ENCODE measurements at regions of chr16 and their contacts with region 1.

Region 1: GRCh38 chr16:27367461-27368357 is 34.3 kb upstream of the IL21R start:
- DNase-seq: peak; percentile 99
- ATAC-seq: peak; percentile 71
- H3K4me3 Mint-ChIP-seq: peak overlapping the region; percentile 50
- H3K27ac Mint-ChIP-seq: peak overlapping the region; percentile 100
- H3K4me1 Mint-ChIP-seq: peaks cover 84% of the 10 kb centered on the region
- H3K27me3 Mint-ChIP-seq: no peaks in the 10 kb centered on the region
- CTCF ChIP-seq: peak; percentile 86

Region 2: DNA sequence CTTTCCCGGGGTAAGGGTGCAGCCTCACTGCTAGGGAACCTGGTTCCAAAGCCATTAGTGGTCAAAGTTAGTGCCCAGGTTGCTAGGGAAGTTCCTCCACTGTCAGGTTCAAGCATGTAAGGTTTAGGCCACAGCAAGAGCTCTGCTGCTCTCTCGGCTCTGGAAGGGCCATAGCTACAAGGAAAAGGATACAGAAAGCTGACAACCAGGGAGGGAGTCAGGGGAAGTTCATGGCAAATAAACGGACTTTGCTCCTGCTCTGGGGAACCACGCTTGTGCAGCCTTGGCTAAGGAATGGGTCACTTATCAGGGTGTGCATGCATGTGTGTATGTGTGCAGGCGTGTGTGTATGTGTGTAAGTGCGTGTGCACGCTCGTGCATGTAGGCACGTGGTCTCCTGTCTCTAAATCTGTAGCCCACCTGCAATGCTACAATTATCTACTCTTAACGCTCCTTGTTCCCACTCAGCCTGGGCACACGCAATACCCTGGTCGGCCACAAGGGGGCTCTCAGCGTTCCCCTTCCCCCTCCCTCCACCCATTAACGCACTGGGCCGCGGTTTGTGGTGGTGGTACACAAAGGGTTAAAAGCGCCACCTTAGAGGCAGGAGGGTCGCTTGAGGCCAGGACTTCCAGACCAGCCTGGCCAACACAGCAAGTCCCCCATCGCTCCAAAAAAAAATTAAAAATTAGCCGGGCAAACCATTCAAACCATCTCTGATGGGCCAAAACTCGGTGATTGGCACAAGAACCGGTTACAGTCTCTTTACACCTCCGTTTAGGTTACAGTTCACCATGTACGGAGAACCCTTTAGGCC is 212.8 kb before region 1 on chr16:
- CTCF ChIA-PET with region 1: interaction called, 13 read pairs
- POLR2A ChIA-PET with region 1: interaction called, 4 read pairs
- intact Hi-C with region 1: no loop called
- DNase-seq: peak; percentile 81
- ATAC-seq: peak; percentile 97
- H3K4me3 Mint-ChIP-seq: no peak overlapping the region
- H3K27ac Mint-ChIP-seq: no peak overlapping the region
- H3K4me1 Mint-ChIP-seq: peaks cover 10% of the 10 kb centered on the region
- H3K27me3 Mint-ChIP-seq: no peaks in the 10 kb centered on the region
- CTCF ChIP-seq: peak; percentile 99

Region 3: GRCh38 chr16:27179500-27180072 is 188.1 kb before region 1 on chr16:
- CTCF ChIA-PET with region 1: interaction called, 57 read pairs
- POLR2A ChIA-PET with region 1: interaction called, 4 read pairs
- intact Hi-C with region 1: loop called (anchors 5 kb)
- DNase-seq: peak; percentile 97
- ATAC-seq: peak; percentile 98
- H3K4me3 Mint-ChIP-seq: no peak overlapping the region
- H3K27ac Mint-ChIP-seq: peak overlapping the region; percentile 43
- H3K4me1 Mint-ChIP-seq: peaks cover 44% of the 10 kb centered on the region
- H3K27me3 Mint-ChIP-seq: no peaks in the 10 kb centered on the region
- CTCF ChIP-seq: peak; percentile 98

Region 4: DNA sequence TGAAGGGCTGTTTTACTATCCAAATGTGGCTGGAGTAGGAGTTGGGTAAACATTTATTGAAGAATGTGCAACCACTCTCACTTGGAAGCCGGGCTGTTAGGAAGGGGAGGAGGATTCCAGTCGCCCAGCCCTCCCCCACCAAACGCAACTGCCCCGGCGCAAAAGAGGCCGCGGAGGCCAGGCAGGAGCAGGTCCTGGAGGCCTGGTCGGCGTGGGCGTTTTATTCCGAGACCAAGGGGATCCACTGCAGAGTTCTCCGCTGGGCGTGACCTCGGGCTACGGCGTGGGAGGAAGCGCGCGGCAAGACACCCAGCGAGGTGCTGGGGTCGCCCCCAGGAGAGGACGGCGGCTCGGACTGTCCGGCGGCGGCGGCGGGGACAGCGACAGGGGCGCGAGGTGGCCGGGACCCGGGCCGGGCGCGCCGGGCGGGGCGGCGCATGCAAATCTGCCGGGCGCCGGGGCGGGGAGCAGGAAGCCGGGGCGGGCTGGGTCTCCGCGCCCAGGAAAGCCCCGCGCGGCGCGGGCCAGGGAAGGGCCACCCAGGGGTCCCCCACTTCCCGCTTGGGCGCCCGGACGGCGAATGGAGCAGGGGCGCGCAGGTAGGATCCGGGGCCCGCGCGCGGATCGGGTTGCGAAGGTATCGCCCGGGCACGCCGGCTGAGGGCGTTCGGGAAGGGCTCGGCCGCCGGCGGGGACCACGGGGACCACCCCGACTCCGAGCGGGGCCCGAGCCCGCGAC is 54.1 kb before region 1 on chr16 and contains the start of gene IL4R:
- CTCF ChIA-PET with region 1: interaction called, 31 read pairs
- POLR2A ChIA-PET with region 1: interaction called, 50 read pairs
- intact Hi-C with region 1: loop called (anchors 2 kb)
- DNase-seq: peak; percentile 91
- ATAC-seq: peak; percentile 10
- H3K4me3 Mint-ChIP-seq: peak within 1 kb of the TSS; percentile 89
- H3K27ac Mint-ChIP-seq: peak within 1 kb of the TSS; percentile 98
- H3K4me1 Mint-ChIP-seq: peaks cover 26% of the 10 kb centered on the region
- H3K27me3 Mint-ChIP-seq: no peaks in the 10 kb centered on the region
- CTCF ChIP-seq: no peak
- total RNA-seq, gene IL4R: 236 to 245 TPM

Region 5: DNA sequence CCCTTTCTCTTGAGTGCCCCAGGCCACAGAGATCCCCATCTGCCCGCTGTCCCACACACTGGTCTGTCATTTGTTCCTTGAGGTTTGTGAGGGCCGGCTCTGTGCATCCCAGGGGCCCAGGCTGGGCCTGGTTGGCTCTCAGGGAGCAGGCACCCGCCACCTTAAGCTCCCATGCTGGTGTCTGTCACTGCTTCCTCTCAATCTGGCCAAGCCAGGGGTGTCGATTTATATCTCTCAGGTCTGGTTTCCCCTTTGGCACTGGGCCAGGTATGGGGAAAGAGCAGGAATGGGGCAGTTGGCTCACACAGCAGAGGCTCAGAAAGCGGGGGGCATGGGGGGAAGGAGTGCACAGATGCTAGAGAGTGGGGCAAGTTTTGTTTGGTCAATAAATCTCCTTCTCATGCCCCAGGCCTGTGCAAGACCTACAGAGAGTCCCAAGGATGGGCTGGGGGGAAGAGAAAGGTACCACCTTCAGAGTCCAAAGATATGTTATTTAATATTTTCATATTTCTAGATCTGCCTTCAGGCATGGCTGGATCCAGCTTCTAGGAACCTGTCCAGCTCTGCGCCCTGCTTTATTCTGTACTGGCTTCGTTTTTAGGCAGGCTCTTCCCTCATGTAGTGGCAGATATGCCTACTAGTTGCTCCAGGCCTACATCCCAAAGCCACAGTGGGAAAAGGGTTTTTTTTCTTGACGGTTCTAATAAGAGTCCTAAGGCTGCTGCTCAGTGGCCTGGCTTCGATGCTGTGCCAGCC is 19.6 kb before region 1 on chr16:
- CTCF ChIA-PET with region 1: no interaction called
- POLR2A ChIA-PET with region 1: interaction called, 16 read pairs
- intact Hi-C with region 1: no loop called
- DNase-seq: no peak
- ATAC-seq: no peak
- H3K4me3 Mint-ChIP-seq: no peak overlapping the region
- H3K27ac Mint-ChIP-seq: no peak overlapping the region
- H3K4me1 Mint-ChIP-seq: peaks cover 16% of the 10 kb centered on the region
- H3K27me3 Mint-ChIP-seq: no peaks in the 10 kb centered on the region
- CTCF ChIP-seq: no peak

Region 6: GRCh38 chr16:27408012-27408601 is 40.4 kb after region 1 on chr16:
- CTCF ChIA-PET with region 1: interaction called, 92 read pairs
- POLR2A ChIA-PET with region 1: interaction called, 168 read pairs
- intact Hi-C with region 1: loop called (anchors 2 kb)
- DNase-seq: peak; percentile 86
- ATAC-seq: peak; percentile 72
- H3K4me3 Mint-ChIP-seq: peak overlapping the region; percentile 99
- H3K27ac Mint-ChIP-seq: peak overlapping the region; percentile 96
- H3K4me1 Mint-ChIP-seq: peaks cover 65% of the 10 kb centered on the region
- H3K27me3 Mint-ChIP-seq: no peaks in the 10 kb centered on the region
- CTCF ChIP-seq: no peak

Region 7: GRCh38 chr16:27455700-27456099 is 88.0 kb after region 1 on chr16:
- CTCF ChIA-PET with region 1: interaction called, 16 read pairs
- POLR2A ChIA-PET with region 1: interaction called, 25 read pairs
- intact Hi-C with region 1: loop called (anchors 5 kb)
- DNase-seq: peak; percentile 60
- ATAC-seq: peak; percentile 14
- H3K4me3 Mint-ChIP-seq: no peak overlapping the region
- H3K27ac Mint-ChIP-seq: peak overlapping the region; percentile 73
- H3K4me1 Mint-ChIP-seq: peaks cover 71% of the 10 kb centered on the region
- H3K27me3 Mint-ChIP-seq: no peaks in the 10 kb centered on the region
- CTCF ChIP-seq: no peak

Region 8: GRCh38 chr16:27495191-27495590 is 127.5 kb after region 1 on chr16:
- CTCF ChIA-PET with region 1: no interaction called
- POLR2A ChIA-PET with region 1: no interaction called
- intact Hi-C with region 1: no loop called
- DNase-seq: no peak
- ATAC-seq: no peak
- H3K4me3 Mint-ChIP-seq: no peak overlapping the region
- H3K27ac Mint-ChIP-seq: no peak overlapping the region
- H3K4me1 Mint-ChIP-seq: no peaks in the 10 kb centered on the region
- H3K27me3 Mint-ChIP-seq: no peaks in the 10 kb centered on the region
- CTCF ChIP-seq: no peak

Measured in activated CD8-positive, alpha-beta T cell treated with anti-CD3 and anti-CD28 coated beads for 36 hours (primary cell).